ENCODE measurements at regions of chr9 and their contacts with region 1.

Region 1: GRCh38 chr9:111926421-111926875 is 29.8 kb downstream of the UGCG start:
- DNase-seq: peak; percentile 24 to 77 (median 67)
- H3K4me3 ChIP-seq: peak overlapping the region; percentile 44
- H3K4me3 Mint-ChIP-seq: peak overlapping the region; percentile 11 to 85 (median 76)
- H3K27ac ChIP-seq: no peak overlapping the region
- H3K27ac Mint-ChIP-seq: peak overlapping the region; percentile 58 to 95 (median 90)
- H3K4me1 ChIP-seq: peaks cover 33% of the 10 kb centered on the region
- H3K4me1 Mint-ChIP-seq: peaks cover 37 to 52% (median 50%) of the 10 kb centered on the region in 3 donors
- H3K27me3 ChIP-seq: no peaks in the 10 kb centered on the region
- H3K27me3 Mint-ChIP-seq: no peaks in the 10 kb centered on the region

Region 2: GRCh38 chr9:111896353-111896958 is 30.0 kb before region 1 on chr9 and contains the start of gene UGCG:
- CTCF ChIA-PET with region 1: interaction called, 3 read pairs
- POLR2A ChIA-PET with region 1: interaction called, 12 read pairs
- DNase-seq: peak; percentile 80 to 91 (median 88)
- H3K4me3 ChIP-seq: peak within 1 kb of the TSS; percentile 72
- H3K4me3 Mint-ChIP-seq: peak within 1 kb of the TSS in 6 of 7 donors; percentile 92 to 98 (median 96)
- H3K27ac ChIP-seq: peak within 1 kb of the TSS; percentile 71
- H3K27ac Mint-ChIP-seq: peak within 1 kb of the TSS; percentile 86 to 98 (median 94)
- H3K4me1 ChIP-seq: peaks cover 46% of the 10 kb centered on the region
- H3K4me1 Mint-ChIP-seq: peaks cover 20 to 32% (median 30%) of the 10 kb centered on the region in 3 donors
- H3K27me3 ChIP-seq: no peaks in the 10 kb centered on the region
- H3K27me3 Mint-ChIP-seq: no peaks in the 10 kb centered on the region
- total RNA-seq, gene UGCG: 20.4 to 23.2 TPM

Region 3: DNA sequence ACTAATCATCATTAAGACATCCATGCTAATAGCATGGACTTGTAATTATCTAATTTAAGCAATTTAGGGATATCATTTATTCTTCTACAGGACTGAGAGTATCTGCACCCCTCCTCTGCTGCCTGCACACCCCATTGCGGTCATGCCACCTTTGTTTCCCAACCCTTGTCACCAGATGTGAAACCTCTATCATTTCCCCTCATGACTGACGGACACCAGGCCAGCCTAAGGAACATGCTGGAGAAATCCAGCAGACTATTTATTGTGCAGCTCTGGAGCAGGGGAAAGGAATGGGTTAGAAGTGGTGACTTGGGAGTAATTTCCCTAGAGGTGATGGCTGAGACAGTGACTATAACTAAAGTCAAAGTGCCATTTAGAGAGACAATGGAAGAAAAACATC is 10.9 kb after region 1 on chr9:
- CTCF ChIA-PET with region 1: interaction called, 11 read pairs
- POLR2A ChIA-PET with region 1: interaction called, 3 read pairs
- DNase-seq: no peak
- H3K4me3 ChIP-seq: no peak overlapping the region
- H3K4me3 Mint-ChIP-seq: peak overlapping the region in 6 of 7 donors; percentile 27 to 83 (median 74)
- H3K27ac ChIP-seq: no peak overlapping the region
- H3K27ac Mint-ChIP-seq: peak overlapping the region in 6 of 8 donors; percentile 59 to 95 (median 91)
- H3K4me1 ChIP-seq: peaks cover 20% of the 10 kb centered on the region
- H3K4me1 Mint-ChIP-seq: peaks cover 30 to 36% (median 30%) of the 10 kb centered on the region in 3 donors
- H3K27me3 ChIP-seq: no peaks in the 10 kb centered on the region
- H3K27me3 Mint-ChIP-seq: no peaks in the 10 kb centered on the region

Region 4: GRCh38 chr9:112002131-112002846 is 75.8 kb after region 1 on chr9:
- CTCF ChIA-PET with region 1: no interaction called
- POLR2A ChIA-PET with region 1: no interaction called
- DNase-seq: peak in 2 of 5 donors; percentile 12 to 35
- H3K4me3 ChIP-seq: no peak overlapping the region
- H3K4me3 Mint-ChIP-seq: peak overlapping the region in 4 of 7 donors; percentile 5 to 68 (median 46)
- H3K27ac ChIP-seq: no peak overlapping the region
- H3K27ac Mint-ChIP-seq: peak overlapping the region in 7 of 8 donors; percentile 7 to 91 (median 77)
- H3K4me1 ChIP-seq: peaks cover 15% of the 10 kb centered on the region
- H3K4me1 Mint-ChIP-seq: peaks cover 13 to 27% (median 15%) of the 10 kb centered on the region in 3 donors
- H3K27me3 ChIP-seq: no peaks in the 10 kb centered on the region
- H3K27me3 Mint-ChIP-seq: no peaks in the 10 kb centered on the region

Measured in CD8-positive, alpha-beta memory T cell (primary cell).